ENCODE measurements at regions of chr11 and their contacts with region 1.

Region 1: GRCh38 chr11:45857961-45858474 is 10.7 kb downstream of the CRY2 start:
- DNase-seq: no peak
- CTCF ChIP-seq: no peak

Region 2: DNA sequence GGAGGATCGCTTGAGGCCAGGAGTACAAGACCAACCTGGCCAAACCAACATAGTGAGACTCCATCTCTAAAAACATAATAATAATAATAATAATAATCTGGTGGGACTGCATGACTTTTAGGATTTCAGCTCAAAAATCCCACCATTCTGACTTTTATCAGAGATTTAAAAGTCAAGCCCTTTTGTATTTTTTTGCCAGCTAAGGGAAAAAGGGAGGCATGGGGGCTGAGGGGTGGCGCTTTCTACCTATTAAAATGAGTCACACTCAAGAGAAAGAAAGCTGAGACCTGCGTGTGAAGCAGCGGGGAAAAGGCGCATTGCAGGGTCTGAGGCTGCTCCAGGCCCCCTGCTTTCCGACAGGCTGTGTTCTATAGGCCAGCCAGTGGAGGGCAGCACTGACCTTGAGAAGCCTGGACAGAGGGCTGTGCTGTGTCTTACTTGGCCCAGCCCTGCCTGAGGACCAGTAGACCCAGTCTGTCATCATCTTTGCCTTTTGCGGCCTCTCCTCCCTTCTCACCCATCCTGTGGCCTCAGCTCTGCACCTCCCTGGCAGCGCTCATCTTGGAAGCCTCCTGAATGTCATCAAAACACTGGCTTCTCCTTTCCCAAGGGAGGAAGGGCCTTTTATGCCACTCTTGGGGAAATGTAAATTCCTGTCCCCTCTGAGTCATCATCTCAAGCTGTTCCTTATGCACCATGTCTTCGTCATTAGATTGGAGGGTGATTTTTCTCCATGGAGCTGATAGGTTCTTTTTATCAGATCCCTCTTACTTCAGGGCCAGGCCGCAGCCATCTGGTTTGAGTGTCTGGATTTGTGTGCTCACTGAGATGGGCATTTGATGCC is 14.7 kb after region 1 on chr11:
- CTCF ChIA-PET with region 1: interaction called, 18 read pairs
- POLR2A ChIA-PET with region 1: no interaction called
- DNase-seq: peak; percentile 52
- CTCF ChIP-seq: peak; percentile 60

Measured in GM10248 (cell line).